PC-9 (cell line): ENCODE measurements at regions of chr3 and their contacts with region 1.

Region 1: GRCh38 chr3:60269377-60269776 is 981.9 kb downstream of the FHIT start:
- DNase-seq: no peak
- H3K4me3 ChIP-seq: no peak overlapping the region
- H3K27ac ChIP-seq: no peak overlapping the region
- H3K4me1 ChIP-seq: no peaks in the 10 kb centered on the region
- H3K27me3 ChIP-seq: no peaks in the 10 kb centered on the region
- CTCF ChIP-seq: no peak

Region 2: GRCh38 chr3:60294181-60294580 is 24.8 kb after region 1 on chr3:
- CTCF ChIA-PET with region 1: no interaction called
- POLR2A ChIA-PET with region 1: interaction called, 12 read pairs
- intact Hi-C with region 1: no loop called
- DNase-seq: no peak
- H3K4me3 ChIP-seq: no peak overlapping the region
- H3K27ac ChIP-seq: no peak overlapping the region
- H3K4me1 ChIP-seq: no peaks in the 10 kb centered on the region
- H3K27me3 ChIP-seq: no peaks in the 10 kb centered on the region
- CTCF ChIP-seq: no peak

Region 3: DNA sequence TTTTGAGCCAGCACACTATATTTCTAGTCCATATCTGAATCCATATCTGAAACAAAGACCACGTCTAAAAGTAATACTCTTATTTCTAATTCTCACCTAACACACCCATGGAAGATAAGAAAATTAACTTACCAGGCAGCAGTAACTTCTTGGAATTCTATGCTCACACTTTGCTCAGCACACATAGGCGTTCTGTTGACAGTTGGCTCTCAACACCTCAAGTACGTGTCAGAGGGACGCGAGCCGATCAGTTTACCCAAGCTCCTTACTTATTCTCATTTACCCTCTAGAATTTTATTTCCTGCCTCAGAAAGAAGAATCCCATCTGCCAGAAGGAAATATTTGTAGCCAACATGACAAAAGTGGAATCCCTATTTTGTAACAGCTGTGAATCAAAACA is 69.9 kb after region 1 on chr3:
- CTCF ChIA-PET with region 1: no interaction called
- POLR2A ChIA-PET with region 1: no interaction called
- intact Hi-C with region 1: no loop called
- DNase-seq: no peak
- H3K4me3 ChIP-seq: no peak overlapping the region
- H3K27ac ChIP-seq: no peak overlapping the region
- H3K4me1 ChIP-seq: no peaks in the 10 kb centered on the region
- H3K27me3 ChIP-seq: no peaks in the 10 kb centered on the region
- CTCF ChIP-seq: no peak